Lower lobe of right lung (tissue), 2 donors: ENCODE measurements at regions of chr19 and their contacts with region 1.

Region 1: GRCh38 chr19:49443366-49444099 is 2.2 kb upstream of the SLC17A7 start:
- DNase-seq: peak; percentile 97
- ATAC-seq: peak; percentile 95
- H3K4me3 ChIP-seq: peak overlapping the region; percentile 86
- H3K27ac ChIP-seq: peak overlapping the region; percentile 72
- H3K4me1 ChIP-seq: peaks cover 7% of the 10 kb centered on the region
- H3K27me3 ChIP-seq: peaks cover 35% of the 10 kb centered on the region
- CTCF ChIP-seq: peak; percentile 89

Region 2: DNA sequence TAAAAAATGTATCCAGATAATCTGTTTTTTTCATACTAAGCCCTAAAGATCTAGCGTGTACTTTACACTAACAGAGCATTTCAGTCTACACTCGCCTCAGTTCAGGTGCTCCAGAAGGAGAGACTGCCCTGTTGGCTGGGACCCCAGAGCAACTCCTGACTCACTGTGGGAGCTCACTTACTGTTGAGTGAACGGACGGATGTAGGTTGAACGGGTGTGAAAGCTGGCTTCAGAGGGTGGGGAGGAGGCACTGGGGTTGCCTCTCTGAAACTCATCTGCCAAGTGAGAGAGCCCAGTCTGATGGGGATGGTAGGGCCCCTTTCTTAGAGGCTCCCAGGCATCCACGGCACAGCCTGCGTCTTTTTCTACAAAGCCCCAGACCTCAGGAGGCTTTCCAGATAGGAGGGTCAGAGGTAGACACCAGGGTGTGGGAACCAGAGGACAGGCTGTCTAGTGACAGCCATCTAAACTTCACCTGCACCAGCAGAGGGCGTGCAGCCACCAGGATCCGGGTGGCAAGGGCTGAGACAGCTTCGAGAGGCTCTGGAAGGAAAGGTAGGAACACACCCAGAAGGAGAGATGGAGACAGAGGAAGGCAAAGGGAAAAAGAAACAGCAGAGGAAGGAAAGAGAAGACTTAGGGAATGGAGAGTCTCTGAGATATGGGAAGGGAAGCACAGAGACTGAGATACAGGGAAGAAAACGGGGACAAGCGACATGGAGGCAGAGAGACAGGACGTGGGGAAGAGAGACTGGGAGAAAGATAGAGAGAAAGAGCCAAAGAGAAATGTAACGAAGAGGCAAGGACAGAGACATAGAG is 51.7 kb before region 1 on chr19:
- intact Hi-C with region 1: loop called (anchors 10 kb)
- DNase-seq: peak; percentile 81
- ATAC-seq: peak; percentile 78 to 85
- H3K4me3 ChIP-seq: no peak overlapping the region
- H3K27ac ChIP-seq: no peak overlapping the region
- H3K4me1 ChIP-seq: no peaks in the 10 kb centered on the region
- H3K27me3 ChIP-seq: no peaks in the 10 kb centered on the region
- CTCF ChIP-seq: peak; percentile 85